ENCODE measurements at regions of chr10 and their contacts with region 1.

Region 1: DNA sequence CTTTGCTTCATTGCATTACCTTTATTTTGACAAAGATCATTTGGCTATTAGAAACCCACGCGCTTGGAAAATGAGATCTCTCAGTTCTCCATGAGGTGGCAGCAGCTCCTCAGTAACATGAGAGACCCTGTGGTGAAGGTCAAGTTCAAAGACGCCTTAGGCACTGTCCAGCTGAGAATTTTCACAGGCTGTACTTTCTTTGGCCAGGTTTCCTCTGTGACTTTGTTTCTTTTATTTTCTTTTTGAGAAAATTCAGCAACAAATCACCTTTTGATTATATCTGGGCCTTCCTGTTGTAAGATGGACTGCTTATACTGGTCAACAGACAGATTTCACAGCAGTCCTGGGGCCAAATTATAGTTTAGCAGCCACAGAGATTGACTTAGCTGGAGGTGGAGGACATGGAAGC is 54.5 kb downstream of the RAB18 start:
- DNase-seq: peak in 6 of 9 experiments; percentile 17 to 63 (median 35)
- ATAC-seq: no peak
- H3K4me3 ChIP-seq: no peak overlapping the region
- H3K4me3 Mint-ChIP-seq: no peak overlapping the region
- H3K27ac ChIP-seq: no peak overlapping the region
- H3K27ac Mint-ChIP-seq: no peak overlapping the region
- H3K4me1 ChIP-seq: no peaks in the 10 kb centered on the region
- H3K4me1 Mint-ChIP-seq: peaks cover 6% of the 10 kb centered on the region
- H3K27me3 ChIP-seq: no peaks in the 10 kb centered on the region
- H3K27me3 Mint-ChIP-seq: no peaks in the 10 kb centered on the region
- CTCF ChIP-seq: peak; percentile 61

Region 2: GRCh38 chr10:27328946-27329345 is 229.7 kb before region 1 on chr10:
- CTCF ChIA-PET with region 1: no interaction called
- POLR2A ChIA-PET with region 1: no interaction called
- intact Hi-C with region 1: no loop called
- DNase-seq: no peak
- ATAC-seq: no peak
- H3K4me3 ChIP-seq: no peak overlapping the region
- H3K4me3 Mint-ChIP-seq: no peak overlapping the region
- H3K27ac ChIP-seq: no peak overlapping the region
- H3K27ac Mint-ChIP-seq: no peak overlapping the region
- H3K4me1 ChIP-seq: no peaks in the 10 kb centered on the region
- H3K4me1 Mint-ChIP-seq: no peaks in the 10 kb centered on the region
- H3K27me3 ChIP-seq: no peaks in the 10 kb centered on the region
- H3K27me3 Mint-ChIP-seq: peaks cover 11% of the 10 kb centered on the region
- CTCF ChIP-seq: no peak

Region 3: DNA sequence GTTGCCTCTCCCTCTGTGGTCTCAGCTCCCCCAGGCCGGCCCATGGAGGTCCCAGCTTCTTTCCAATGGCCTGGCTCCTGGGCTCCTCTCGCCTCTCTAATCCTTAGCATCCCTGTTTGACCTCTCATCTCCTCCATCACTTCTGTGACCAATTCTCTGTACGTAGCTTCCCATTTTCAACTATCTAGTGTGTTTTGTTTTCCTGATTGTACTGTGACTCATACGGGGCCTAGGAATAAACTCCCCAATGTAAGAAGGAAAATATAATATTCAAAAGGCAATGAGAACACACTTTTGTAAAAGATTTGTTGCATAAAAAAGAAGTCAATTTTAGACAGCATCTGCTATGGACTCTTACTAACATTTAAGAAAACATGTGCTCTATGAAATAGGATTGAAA is 96.7 kb after region 1 on chr10:
- CTCF ChIA-PET with region 1: interaction called, 25 read pairs
- POLR2A ChIA-PET with region 1: no interaction called
- intact Hi-C with region 1: loop called (anchors 1 kb)
- DNase-seq: no peak
- ATAC-seq: no peak
- H3K4me3 ChIP-seq: no peak overlapping the region
- H3K4me3 Mint-ChIP-seq: no peak overlapping the region
- H3K27ac ChIP-seq: no peak overlapping the region
- H3K27ac Mint-ChIP-seq: no peak overlapping the region
- H3K4me1 ChIP-seq: no peaks in the 10 kb centered on the region
- H3K4me1 Mint-ChIP-seq: no peaks in the 10 kb centered on the region
- H3K27me3 ChIP-seq: no peaks in the 10 kb centered on the region
- H3K27me3 Mint-ChIP-seq: peaks cover 10% of the 10 kb centered on the region
- CTCF ChIP-seq: no peak

Region 4: GRCh38 chr10:27713927-27714326 is 155.3 kb after region 1 on chr10:
- CTCF ChIA-PET with region 1: no interaction called
- POLR2A ChIA-PET with region 1: no interaction called
- intact Hi-C with region 1: no loop called
- DNase-seq: no peak
- ATAC-seq: no peak
- H3K4me3 ChIP-seq: no peak overlapping the region
- H3K4me3 Mint-ChIP-seq: no peak overlapping the region
- H3K27ac ChIP-seq: no peak overlapping the region
- H3K27ac Mint-ChIP-seq: no peak overlapping the region
- H3K4me1 ChIP-seq: no peaks in the 10 kb centered on the region
- H3K4me1 Mint-ChIP-seq: peaks cover 2% of the 10 kb centered on the region
- H3K27me3 ChIP-seq: peaks cover 0 to under 1% of the 10 kb centered on the region in 2 experiments
- H3K27me3 Mint-ChIP-seq: peaks cover 27% of the 10 kb centered on the region
- CTCF ChIP-seq: no peak